Right ventricle myocardium inferior (tissue), 1 donor: ENCODE measurements at regions of chr20 and their contacts with region 1.

Region 1: DNA sequence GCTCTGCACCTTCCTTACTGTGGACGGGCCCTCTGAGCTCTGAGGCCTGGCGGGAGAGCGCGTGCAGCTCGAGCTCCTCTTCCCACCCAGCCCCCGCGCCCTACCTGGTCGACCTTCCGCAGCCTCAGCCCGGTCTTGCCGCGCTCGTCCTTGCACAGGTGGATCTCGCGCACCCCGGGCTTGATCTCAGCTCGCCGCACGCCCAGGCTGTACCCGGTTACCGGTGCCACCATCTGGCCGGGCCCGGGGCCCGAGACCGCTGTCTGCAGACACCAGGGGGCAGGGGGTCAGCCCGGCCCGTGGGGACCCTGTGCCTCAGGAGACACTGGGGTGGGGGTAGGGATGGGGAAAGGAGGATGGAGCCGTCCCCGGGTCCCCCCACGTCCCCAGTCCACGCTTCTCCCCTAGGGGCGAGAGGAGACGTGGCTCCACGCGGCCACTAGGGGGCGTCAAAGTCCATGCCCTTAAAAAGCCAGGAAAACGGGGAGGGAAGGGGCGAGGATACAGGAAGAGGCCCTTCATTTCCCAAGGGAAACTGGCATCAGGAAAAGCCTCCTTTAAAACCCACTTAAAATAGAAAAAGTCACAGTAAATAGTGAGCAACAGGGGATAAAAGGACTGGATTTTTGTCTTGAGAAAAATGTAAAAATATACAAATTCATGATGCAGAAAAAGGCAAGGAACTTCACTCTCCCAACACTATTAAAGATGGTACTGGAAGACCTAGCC is 15.5 kb downstream of the SDCBP2 start:
- DNase-seq: peak; percentile 90
- ATAC-seq: peak; percentile 84

Region 2: GRCh38 chr20:1437235-1437904 is 124.0 kb after region 1 on chr20:
- intact Hi-C with region 1: loop called (anchors 1 kb)
- DNase-seq: peak; percentile 88
- ATAC-seq: peak; percentile 52